Mammary epithelial cell (primary cell): ENCODE measurements at regions of chr9 and their contacts with region 1.

Region 1: DNA sequence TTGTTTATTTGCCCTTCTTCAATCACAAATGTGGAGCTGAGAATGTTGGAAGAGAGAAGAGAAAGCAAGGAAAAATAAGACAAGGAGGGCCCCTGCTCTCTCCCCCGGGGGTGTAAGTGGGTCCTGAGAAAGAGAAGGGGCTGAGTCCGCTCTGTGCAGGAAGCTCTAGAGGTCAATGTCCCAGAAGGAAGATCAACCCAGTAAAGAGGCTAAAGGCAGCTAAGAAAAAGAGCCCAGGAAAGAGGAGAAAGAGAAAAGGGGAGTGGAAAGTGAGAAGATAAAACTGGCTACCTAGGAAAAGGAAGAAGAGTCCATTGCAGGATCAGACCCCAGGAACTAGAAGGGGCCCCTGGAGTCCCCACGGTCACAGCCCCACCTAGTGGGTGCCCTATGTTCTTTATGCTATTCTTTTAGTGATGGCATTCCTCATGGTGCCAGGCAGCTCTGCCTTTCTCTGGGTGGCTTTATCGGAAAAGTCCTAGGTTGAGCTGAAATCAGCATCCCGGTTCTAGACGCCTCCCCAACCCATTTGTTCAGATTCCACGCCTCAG is 583.4 kb downstream of the ACTL7B start:
- DNase-seq: peak; percentile 55
- H3K4me3 ChIP-seq: no peak overlapping the region
- H3K27ac ChIP-seq: peak overlapping the region; percentile 35
- H3K4me1 ChIP-seq: peaks cover 25% of the 10 kb centered on the region
- H3K27me3 ChIP-seq: no peaks in the 10 kb centered on the region
- CTCF ChIP-seq: peak; percentile 61 to 70

Region 2: GRCh38 chr9:107421947-107422793 is 850.3 kb before region 1 on chr9:
- CTCF ChIA-PET with region 1: no interaction called
- dilution Hi-C with region 1: no loop called
- in situ Hi-C with region 1: no loop called
- intact Hi-C with region 1: loop called (anchors 1 kb)
- DNase-seq: peak; percentile 59
- H3K4me3 ChIP-seq: no peak overlapping the region
- H3K27ac ChIP-seq: no peak overlapping the region
- H3K4me1 ChIP-seq: peaks cover 3% of the 10 kb centered on the region
- H3K27me3 ChIP-seq: no peaks in the 10 kb centered on the region
- CTCF ChIP-seq: peak; percentile 65 to 81

Region 3: GRCh38 chr9:107489687-107490605 is 782.5 kb before region 1 on chr9 and contains the start of gene KLF4:
- CTCF ChIA-PET with region 1: interaction called, 3 read pairs
- dilution Hi-C with region 1: no loop called
- in situ Hi-C with region 1: loop called in 1 of 2 experiments (anchors 10 kb)
- intact Hi-C with region 1: loop called (anchors 1 kb)
- DNase-seq: peak; percentile 91
- H3K4me3 ChIP-seq: peak within 1 kb of the TSS; percentile 93 to 97 (median 94)
- H3K27ac ChIP-seq: peak within 1 kb of the TSS; percentile 83
- H3K4me1 ChIP-seq: peaks cover 39% of the 10 kb centered on the region
- H3K27me3 ChIP-seq: no peaks in the 10 kb centered on the region
- CTCF ChIP-seq: no peak
- total RNA-seq, gene KLF4: 20.5 to 52.5 TPM

Region 4: DNA sequence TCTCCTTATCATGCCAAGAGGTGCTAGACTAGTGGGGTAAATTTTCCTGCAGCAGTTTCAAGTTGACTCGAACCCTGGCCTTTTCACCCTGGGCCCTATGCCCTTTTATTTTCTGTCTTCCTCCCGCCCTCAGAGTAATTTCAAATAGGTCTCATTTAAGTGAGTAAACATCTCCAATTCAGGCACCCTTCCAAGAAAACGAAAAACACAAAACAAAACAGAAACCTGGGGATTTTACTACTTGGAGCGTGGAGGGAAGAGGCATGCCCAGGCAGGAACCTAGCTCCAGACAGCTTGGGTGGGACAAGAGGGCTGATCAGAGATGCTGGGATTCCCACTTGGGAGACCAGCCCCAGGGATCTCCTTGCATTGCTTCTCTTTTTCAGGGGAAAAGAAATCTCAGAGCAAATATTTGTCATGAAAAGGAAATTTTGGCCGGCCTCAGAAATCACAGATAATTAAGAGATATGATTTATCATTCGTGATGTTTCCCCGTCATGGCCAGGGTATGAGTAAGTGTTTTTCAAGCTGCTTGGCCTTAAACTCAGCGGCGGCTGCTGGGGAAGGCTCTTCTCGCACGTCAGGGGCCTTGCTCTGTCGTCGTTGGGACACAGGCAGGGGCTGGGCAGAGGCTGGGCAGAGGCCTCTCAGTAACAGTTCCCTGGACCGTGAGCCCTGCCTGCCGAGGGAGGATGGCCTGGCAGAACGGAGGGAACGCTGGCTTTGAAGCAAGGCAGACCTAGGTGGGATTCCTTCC is 534.3 kb before region 1 on chr9:
- CTCF ChIA-PET with region 1: no interaction called
- dilution Hi-C with region 1: no loop called
- in situ Hi-C with region 1: no loop called
- intact Hi-C with region 1: loop called (anchors 5 kb)
- DNase-seq: peak; percentile 91
- H3K4me3 ChIP-seq: no peak overlapping the region
- H3K27ac ChIP-seq: peak overlapping the region; percentile 43
- H3K4me1 ChIP-seq: peaks cover 45% of the 10 kb centered on the region
- H3K27me3 ChIP-seq: no peaks in the 10 kb centered on the region
- CTCF ChIP-seq: no peak

Region 5: GRCh38 chr9:108002371-108002956 is 270.0 kb before region 1 on chr9:
- CTCF ChIA-PET with region 1: no interaction called
- dilution Hi-C with region 1: no loop called
- in situ Hi-C with region 1: no loop called
- intact Hi-C with region 1: loop called (anchors 1 kb)
- DNase-seq: no peak
- H3K4me3 ChIP-seq: no peak overlapping the region
- H3K27ac ChIP-seq: no peak overlapping the region
- H3K4me1 ChIP-seq: peaks cover 15% of the 10 kb centered on the region
- H3K27me3 ChIP-seq: no peaks in the 10 kb centered on the region
- CTCF ChIP-seq: no peak

Region 6: DNA sequence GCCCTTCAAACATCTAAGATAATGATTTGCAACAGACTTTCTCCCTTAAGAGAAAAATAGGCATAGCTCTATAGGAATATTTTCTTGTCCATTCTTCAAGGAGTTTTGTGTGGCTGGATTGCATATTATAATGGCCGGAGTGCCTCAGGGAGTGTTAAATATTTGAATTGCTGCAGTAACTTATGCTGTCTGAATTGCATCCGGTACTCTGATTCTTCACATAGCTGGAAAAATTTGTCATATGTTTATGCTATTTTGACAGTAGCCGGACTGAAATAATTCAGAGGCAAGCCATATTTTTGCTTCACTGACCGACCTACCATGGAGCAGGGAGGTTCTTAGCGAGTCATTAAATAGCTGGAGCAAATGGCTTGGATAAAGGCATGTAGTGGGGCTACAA is 37.6 kb before region 1 on chr9:
- CTCF ChIA-PET with region 1: no interaction called
- dilution Hi-C with region 1: no loop called
- in situ Hi-C with region 1: no loop called
- intact Hi-C with region 1: no loop called
- DNase-seq: no peak
- H3K4me3 ChIP-seq: no peak overlapping the region
- H3K27ac ChIP-seq: no peak overlapping the region
- H3K4me1 ChIP-seq: no peaks in the 10 kb centered on the region
- H3K27me3 ChIP-seq: no peaks in the 10 kb centered on the region
- CTCF ChIP-seq: no peak

Region 7: DNA sequence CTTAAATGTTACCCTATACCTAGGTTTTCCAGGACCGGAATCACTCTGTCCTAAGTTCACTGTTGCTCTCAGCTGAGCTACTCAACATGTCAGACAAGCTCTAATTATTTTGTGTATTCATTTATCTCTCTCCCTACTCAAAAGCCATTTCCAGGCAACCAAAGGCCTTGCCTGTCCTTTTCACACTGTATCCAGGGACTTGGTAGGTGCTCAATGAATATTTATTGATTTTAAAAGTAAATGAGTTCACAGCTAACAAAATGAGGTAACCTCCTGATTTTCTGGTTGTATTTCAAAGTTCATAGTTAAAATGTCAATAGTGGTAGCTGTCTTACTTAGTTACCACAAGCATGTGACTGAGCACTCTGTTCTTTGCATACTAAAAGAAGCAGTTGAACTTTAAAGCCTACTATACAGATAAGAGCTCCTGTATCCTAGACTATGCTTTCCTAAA is 61.1 kb after region 1 on chr9:
- CTCF ChIA-PET with region 1: no interaction called
- dilution Hi-C with region 1: loop called (anchors 10 kb)
- in situ Hi-C with region 1: no loop called
- intact Hi-C with region 1: no loop called
- DNase-seq: no peak
- H3K4me3 ChIP-seq: no peak overlapping the region
- H3K27ac ChIP-seq: no peak overlapping the region
- H3K4me1 ChIP-seq: no peaks in the 10 kb centered on the region
- H3K27me3 ChIP-seq: no peaks in the 10 kb centered on the region
- CTCF ChIP-seq: no peak

Region 8: GRCh38 chr9:108417726-108418125 is 145.3 kb after region 1 on chr9:
- CTCF ChIA-PET with region 1: no interaction called
- dilution Hi-C with region 1: no loop called
- in situ Hi-C with region 1: no loop called
- intact Hi-C with region 1: no loop called
- DNase-seq: no peak
- H3K4me3 ChIP-seq: no peak overlapping the region
- H3K27ac ChIP-seq: no peak overlapping the region
- H3K4me1 ChIP-seq: no peaks in the 10 kb centered on the region
- H3K27me3 ChIP-seq: no peaks in the 10 kb centered on the region
- CTCF ChIP-seq: no peak

Region 9: DNA sequence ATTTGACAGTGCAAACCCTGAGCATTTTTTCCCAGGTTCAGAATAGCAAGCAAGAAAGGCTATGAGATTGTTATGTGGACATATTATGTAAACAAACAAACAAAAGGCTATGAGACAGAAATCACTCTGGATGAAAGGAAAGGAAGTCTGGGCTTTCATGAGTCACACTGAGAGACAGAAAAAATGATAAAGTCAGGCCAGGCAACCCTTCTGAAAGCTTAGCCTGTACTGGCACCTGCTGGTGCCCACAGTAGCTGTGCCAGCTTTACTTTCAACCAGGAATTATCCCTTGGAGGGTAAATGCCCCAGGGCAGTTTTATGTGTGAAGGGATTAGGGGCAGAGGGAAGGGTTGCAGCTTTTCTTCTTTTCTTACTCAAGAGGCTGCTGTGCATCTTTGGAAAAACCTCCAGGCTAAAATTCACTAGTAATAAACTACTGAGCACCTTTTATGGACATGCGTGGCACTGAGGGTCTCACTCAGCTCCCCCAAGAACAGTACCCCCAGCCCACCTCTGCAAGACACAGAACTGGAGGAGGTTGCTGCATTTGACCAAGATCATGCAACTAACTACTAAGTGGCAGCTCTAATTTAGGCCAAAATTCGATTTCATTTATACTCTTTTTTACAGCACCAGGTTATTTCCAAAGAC is 541.7 kb after region 1 on chr9:
- CTCF ChIA-PET with region 1: no interaction called
- dilution Hi-C with region 1: no loop called
- in situ Hi-C with region 1: no loop called
- intact Hi-C with region 1: loop called (anchors 10 kb)
- DNase-seq: peak; percentile 71
- H3K4me3 ChIP-seq: no peak overlapping the region
- H3K27ac ChIP-seq: no peak overlapping the region
- H3K4me1 ChIP-seq: peaks cover 14% of the 10 kb centered on the region
- H3K27me3 ChIP-seq: no peaks in the 10 kb centered on the region
- CTCF ChIP-seq: peak; percentile 84 to 85